Spleen (tissue), 13 donors: ENCODE measurements at regions of chr7 and their contacts with region 1.

Region 1: DNA sequence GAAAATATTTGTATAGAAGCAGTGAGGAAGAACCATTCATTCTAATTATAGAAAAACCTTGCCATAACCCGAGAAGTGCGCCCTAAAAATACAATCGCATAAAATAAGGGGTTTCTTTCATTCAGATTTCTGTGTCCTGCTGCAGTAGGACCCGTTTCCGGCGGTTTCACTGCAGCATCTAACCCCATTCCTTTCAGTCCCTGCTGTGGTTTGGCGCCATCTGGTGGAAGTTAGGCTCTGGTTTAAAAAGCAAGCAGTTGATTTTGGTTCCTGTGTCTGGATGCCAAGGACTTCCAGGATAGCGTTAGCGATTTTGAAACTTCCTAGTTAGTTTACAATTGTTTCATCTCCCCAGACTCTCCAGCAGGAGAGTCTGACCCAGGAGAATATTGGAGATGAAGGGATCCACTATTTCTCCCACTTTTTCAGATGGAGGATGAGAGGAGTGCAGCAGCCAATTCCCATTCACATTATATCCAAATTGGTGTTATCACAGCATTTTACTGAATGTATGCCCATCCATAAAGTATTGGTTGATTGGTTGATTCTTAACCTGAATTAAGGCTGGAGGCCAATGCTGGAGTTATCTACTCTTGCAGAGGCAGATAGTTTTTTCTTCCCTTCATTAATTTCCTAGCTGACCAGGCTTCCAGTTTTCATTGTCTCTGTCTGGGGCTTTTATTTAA is 128.8 kb upstream of the CACNA2D1 start:
- DNase-seq: peak; percentile 80
- H3K4me3 ChIP-seq: no peak overlapping the region
- H3K27ac ChIP-seq: no peak overlapping the region
- H3K4me1 ChIP-seq: peaks cover 0 to 8% (median 0%) of the 10 kb centered on the region in 6 donors
- H3K27me3 ChIP-seq: no peaks in the 10 kb centered on the region
- CTCF ChIP-seq: peak; percentile 33 to 81 (median 72)
- POLR2A ChIP-seq: no peak

Region 2: GRCh38 chr7:81482600-81483186 is 1089.6 kb before region 1 on chr7:
- intact Hi-C with region 1: loop called (anchors 5 kb)
- DNase-seq: no peak
- H3K4me3 ChIP-seq: no peak overlapping the region
- H3K27ac ChIP-seq: no peak overlapping the region
- H3K4me1 ChIP-seq: no peaks in the 10 kb centered on the region
- H3K27me3 ChIP-seq: peaks cover 0 to 3% (median 0%) of the 10 kb centered on the region in 7 donors
- CTCF ChIP-seq: peak in 8 of 11 experiments; percentile 33 to 69 (median 59)
- POLR2A ChIP-seq: no peak

Region 3: DNA sequence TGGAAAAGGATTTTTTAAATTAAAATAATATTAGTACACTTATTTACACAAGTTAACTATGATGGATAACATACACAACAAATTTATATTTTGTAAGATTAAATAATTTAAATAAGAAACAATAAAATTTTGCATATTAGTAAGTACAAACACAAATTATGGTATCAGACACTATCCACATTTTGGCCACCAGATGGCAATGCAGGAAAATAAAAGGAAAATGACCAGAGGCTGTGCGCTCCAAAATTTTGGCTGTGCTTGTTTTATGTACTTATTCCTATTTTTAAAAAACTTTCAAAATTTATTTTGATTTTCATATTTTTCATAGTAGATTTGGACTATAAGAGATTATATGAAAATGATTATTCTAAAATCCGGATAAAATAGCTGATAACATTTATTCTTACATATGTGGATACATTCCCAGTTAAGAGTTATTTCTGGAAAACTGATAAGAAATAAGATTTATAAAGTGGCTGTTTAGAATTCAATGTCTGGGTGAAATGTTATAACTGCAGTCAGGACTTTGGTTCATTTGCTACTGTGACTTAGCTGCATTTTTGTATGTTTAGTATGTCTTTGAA is 527.7 kb before region 1 on chr7:
- intact Hi-C with region 1: loop called (anchors 10 kb)
- DNase-seq: no peak
- H3K4me3 ChIP-seq: no peak overlapping the region
- H3K27ac ChIP-seq: no peak overlapping the region
- H3K4me1 ChIP-seq: no peaks in the 10 kb centered on the region
- H3K27me3 ChIP-seq: no peaks in the 10 kb centered on the region
- CTCF ChIP-seq: peak in 10 of 11 experiments; percentile 15 to 67 (median 50)
- POLR2A ChIP-seq: no peak

Region 4: DNA sequence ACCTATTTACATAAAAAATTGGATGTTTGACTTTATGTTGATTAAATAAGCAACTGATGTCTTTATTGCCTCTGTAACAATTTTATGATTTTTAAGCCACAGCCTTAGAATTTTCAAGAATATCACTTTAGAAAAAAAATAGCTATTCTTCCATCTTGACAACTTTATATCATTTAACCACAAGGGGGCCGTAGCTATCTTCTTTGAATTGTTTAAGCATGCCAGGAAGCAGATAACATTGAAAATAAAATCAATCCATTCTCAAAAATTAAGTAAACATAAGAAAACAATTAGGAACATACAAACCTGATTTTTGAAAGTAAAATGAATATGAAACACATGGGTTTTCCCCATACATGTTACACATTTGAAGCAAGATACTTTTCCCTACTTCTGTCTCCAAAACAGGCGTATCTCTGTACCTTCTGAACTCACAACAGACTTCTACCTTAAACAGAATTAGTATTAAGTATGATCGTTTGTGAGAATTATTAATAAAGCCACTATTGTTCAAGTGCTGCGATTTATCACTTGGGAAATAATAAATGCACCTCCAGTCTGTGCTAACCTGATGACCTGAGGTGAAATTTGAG is 337.8 kb before region 1 on chr7:
- intact Hi-C with region 1: loop called (anchors 10 kb)
- DNase-seq: no peak
- H3K4me3 ChIP-seq: no peak overlapping the region
- H3K27ac ChIP-seq: no peak overlapping the region
- H3K4me1 ChIP-seq: no peaks in the 10 kb centered on the region
- H3K27me3 ChIP-seq: no peaks in the 10 kb centered on the region
- CTCF ChIP-seq: peak in 7 of 11 experiments; percentile 22 to 54 (median 38)
- POLR2A ChIP-seq: no peak

Region 5: GRCh38 chr7:82319674-82320118 is 252.6 kb before region 1 on chr7:
- intact Hi-C with region 1: no loop called
- DNase-seq: no peak
- H3K4me3 ChIP-seq: no peak overlapping the region
- H3K27ac ChIP-seq: no peak overlapping the region
- H3K4me1 ChIP-seq: no peaks in the 10 kb centered on the region
- H3K27me3 ChIP-seq: no peaks in the 10 kb centered on the region
- CTCF ChIP-seq: no peak
- POLR2A ChIP-seq: no peak

Region 6: DNA sequence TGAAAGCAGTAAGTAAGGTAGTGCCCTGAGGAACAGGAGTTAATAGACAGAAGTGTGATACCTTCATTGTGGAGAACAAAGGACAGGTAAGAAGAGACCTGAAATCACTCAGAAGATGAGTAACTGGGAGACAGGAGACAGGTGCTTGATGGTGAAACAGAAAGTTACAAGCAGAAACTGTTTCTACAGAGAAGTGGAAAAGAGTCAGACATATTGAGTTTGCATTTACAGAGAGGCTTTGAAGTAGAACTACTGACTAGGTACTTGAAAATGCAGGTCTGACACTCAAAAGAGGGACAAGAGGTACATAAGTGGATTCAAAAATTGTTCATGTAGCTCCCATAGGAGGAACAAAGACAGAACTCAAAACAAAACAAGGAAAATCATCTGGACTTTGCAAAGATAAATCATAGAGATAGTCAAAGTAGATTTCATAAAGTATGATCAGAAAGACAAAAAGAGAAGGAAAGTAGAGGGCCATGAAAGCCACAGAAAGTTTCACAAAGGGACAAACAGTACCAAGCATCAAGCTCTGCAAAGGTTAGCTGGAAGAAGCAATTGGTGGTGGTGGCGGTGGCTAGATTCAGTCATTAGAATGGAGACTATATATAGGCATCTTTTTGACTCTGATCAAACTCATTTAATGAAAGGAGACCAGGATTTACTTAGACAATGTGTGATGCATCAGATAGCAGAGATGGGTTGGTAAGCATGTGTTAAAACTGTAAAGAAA is 392.0 kb after region 1 on chr7:
- intact Hi-C with region 1: no loop called
- DNase-seq: no peak
- H3K4me3 ChIP-seq: no peak overlapping the region
- H3K27ac ChIP-seq: no peak overlapping the region
- H3K4me1 ChIP-seq: no peaks in the 10 kb centered on the region
- H3K27me3 ChIP-seq: no peaks in the 10 kb centered on the region
- CTCF ChIP-seq: no peak
- POLR2A ChIP-seq: no peak